ENCODE measurements at regions of chr5 and their contacts with region 1.

Region 1: DNA sequence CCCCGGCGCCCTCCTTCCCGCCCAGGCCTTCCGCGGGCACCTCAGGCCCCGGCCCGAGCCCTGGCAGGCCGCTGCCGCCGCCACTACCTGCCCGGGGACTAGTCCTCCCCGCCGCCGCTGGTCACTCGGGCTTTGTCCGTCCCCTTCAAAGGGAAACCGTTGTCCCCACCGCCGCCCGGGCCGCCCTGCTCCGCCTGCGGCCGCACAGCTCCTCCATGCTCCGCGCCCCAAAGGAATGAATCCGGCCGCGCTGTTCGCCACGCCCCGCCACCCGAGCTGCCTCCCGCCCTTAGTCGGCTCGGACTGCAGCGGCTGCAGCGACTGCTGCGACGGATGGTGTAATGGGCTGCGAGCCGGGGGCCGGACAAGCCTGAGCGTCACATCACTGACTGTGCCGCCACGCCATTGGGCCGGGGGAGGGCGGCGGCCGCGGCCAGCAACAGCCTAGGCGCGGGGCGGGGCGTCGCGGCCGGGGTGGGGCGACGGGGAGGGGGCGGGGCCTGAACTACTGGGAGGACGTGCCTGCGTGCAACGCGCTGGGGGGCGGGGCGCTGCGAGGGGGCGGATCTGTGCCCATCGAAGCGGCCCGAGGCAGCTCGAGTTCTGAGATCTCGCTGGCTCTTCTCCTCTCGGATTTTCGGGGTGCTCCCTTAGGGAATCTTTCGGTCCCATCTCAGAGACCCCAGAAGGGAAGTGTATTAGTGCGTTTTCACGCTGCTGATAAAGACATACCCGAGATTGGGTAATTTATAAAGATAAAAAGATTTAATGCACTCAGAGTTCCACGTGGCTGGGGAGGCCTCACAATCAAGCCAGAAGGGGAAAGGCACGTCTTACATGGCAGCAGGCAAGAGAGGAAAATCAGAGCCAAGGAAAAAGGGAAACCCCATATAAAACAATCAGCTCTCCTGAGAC is at the start of gene FEM1C:
- DNase-seq: peak; percentile 91 to 95 (median 92)
- H3K4me3 ChIP-seq: peak within 1 kb of the TSS; percentile 64 to 71
- H3K4me3 Mint-ChIP-seq: peak within 1 kb of the TSS; percentile 93 to 100 (median 95)
- H3K27ac ChIP-seq: peak within 1 kb of the TSS; percentile 97
- H3K27ac Mint-ChIP-seq: peak within 1 kb of the TSS; percentile 97 to 99 (median 98)
- H3K4me1 ChIP-seq: peaks cover 44% of the 10 kb centered on the region
- H3K4me1 Mint-ChIP-seq: peaks cover 30 to 53% (median 38%) of the 10 kb centered on the region in 4 donors
- H3K27me3 ChIP-seq: no peaks in the 10 kb centered on the region
- H3K27me3 Mint-ChIP-seq: no peaks in the 10 kb centered on the region
- total RNA-seq, gene FEM1C: 17.4 to 19.7 TPM

Region 2: DNA sequence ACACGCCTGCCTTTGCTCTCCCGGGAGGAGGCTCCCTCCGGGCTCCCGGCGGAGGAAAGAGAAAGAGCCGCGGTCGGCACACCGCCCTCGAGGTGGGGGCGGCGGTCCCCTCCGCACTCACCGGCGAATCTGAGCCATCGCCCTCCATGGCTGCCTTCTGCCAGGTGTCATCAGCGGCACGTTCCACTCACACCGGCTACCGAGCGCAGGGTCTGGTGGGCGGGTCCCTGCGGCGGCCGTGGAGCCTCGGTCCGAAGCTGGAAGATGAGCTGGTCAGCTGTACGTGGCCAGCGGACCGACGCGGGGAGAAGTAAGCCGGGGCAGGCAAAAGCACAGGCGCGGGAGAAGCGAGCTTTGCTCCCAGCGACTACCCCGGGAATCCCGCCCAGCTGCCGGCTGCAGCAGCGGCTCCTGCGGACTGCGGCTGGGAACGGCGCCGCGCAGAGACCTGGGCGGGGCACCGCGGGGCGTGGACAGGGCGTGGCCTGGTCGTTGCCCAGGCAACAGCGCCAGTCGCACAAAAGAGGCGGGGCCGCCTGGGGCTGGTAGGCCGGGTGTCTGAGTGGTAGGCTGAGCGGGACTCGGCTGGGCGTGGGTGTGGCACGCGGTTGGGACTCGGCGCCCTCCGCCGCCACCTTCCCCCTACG is 375.1 kb before region 1 on chr5 and contains the start of gene TRIM36:
- CTCF ChIA-PET with region 1: no interaction called
- POLR2A ChIA-PET with region 1: no interaction called
- intact Hi-C with region 1: loop called (anchors 2 kb)
- DNase-seq: peak; percentile 83 to 87 (median 86)
- H3K4me3 ChIP-seq: peak within 1 kb of the TSS; percentile 17 to 67
- H3K4me3 Mint-ChIP-seq: peak within 1 kb of the TSS; percentile 79 to 84 (median 81)
- H3K27ac ChIP-seq: no peak within 1 kb of the TSS
- H3K27ac Mint-ChIP-seq: peak within 1 kb of the TSS in 3 of 7 donors; percentile 25 to 64 (median 41)
- H3K4me1 ChIP-seq: peaks cover 21% of the 10 kb centered on the region
- H3K4me1 Mint-ChIP-seq: peaks cover 2 to 13% (median 11%) of the 10 kb centered on the region in 4 donors
- H3K27me3 ChIP-seq: peaks cover 43% of the 10 kb centered on the region
- H3K27me3 Mint-ChIP-seq: peaks cover 38 to 48% of the 10 kb centered on the region in 2 donors
- total RNA-seq, gene TRIM36: not detected

Region 3: GRCh38 chr5:115296124-115297022 is 248.3 kb before region 1 on chr5 and contains the start of gene CCDC112:
- CTCF ChIA-PET with region 1: no interaction called
- POLR2A ChIA-PET with region 1: interaction called, 21 read pairs
- intact Hi-C with region 1: loop called (anchors 1 kb)
- DNase-seq: peak; percentile 61 to 72 (median 64)
- H3K4me3 ChIP-seq: peak within 1 kb of the TSS; percentile 5 to 44
- H3K4me3 Mint-ChIP-seq: peak within 1 kb of the TSS; percentile 83 to 91 (median 89)
- H3K27ac ChIP-seq: no peak within 1 kb of the TSS
- H3K27ac Mint-ChIP-seq: peak within 1 kb of the TSS in 6 of 7 donors; percentile 44 to 83 (median 55)
- H3K4me1 ChIP-seq: peaks cover 13% of the 10 kb centered on the region
- H3K4me1 Mint-ChIP-seq: peaks cover 6 to 17% (median 15%) of the 10 kb centered on the region in 4 donors
- H3K27me3 ChIP-seq: no peaks in the 10 kb centered on the region
- H3K27me3 Mint-ChIP-seq: peaks cover 1 to 2% of the 10 kb centered on the region in 2 donors
- total RNA-seq, gene CCDC112: 5.9 to 6.3 TPM

Region 4: GRCh38 chr5:115530426-115530825 is 14.3 kb before region 1 on chr5:
- CTCF ChIA-PET with region 1: interaction called, 4 read pairs
- POLR2A ChIA-PET with region 1: interaction called, 5 read pairs
- intact Hi-C with region 1: loop called (anchors 1 kb)
- DNase-seq: no peak
- H3K4me3 ChIP-seq: no peak overlapping the region
- H3K4me3 Mint-ChIP-seq: peak overlapping the region in 1 of 8 donors; percentile 23
- H3K27ac ChIP-seq: no peak overlapping the region
- H3K27ac Mint-ChIP-seq: no peak overlapping the region
- H3K4me1 ChIP-seq: peaks cover 53% of the 10 kb centered on the region
- H3K4me1 Mint-ChIP-seq: peaks cover 46 to 74% (median 59%) of the 10 kb centered on the region in 4 donors
- H3K27me3 ChIP-seq: no peaks in the 10 kb centered on the region
- H3K27me3 Mint-ChIP-seq: no peaks in the 10 kb centered on the region

Region 5: DNA sequence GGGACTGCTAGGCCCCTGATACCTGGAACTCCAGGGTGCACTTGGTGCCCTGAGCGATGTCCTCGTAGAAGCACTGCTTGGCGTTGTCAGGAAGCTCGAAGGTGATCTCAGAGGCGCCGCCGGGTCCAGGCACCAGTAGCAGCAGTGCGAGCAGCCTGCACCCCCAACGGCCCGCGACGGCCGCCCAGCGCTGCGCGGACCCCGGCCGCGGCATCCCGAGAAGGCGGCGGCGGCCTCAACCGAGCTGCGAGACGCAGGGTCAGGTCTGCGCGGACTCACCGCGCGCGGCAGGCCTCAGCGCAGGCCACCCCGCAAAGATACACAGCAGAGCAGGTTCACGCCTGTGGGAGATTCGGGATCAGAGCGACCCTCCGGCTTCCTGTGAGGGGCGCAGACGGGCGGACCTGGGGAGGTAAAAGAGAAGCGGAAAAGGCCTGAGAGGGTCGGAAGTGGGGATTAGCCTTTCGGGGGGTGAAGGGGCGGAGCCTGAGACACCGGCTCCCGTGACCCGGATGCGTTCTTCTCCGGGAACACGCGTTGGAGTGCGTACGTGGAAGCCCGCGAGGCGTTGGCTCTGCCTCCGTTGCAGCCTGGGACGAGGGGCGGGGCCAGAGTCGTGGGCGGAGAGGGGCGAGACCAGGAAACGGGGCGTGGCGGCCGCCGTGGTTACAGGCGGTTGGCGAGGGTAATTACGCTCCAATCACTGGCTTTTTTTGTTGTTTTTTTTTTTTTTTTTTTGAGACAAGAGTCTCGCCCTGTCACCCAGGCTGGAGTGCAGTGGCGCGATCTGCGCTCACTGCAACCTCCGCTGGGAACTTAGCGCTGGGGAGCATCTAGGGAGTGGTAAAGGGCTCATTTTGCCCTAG is 81.1 kb after region 1 on chr5 and contains the start of gene TMED7:
- CTCF ChIA-PET with region 1: interaction called, 9 read pairs
- POLR2A ChIA-PET with region 1: interaction called, 35 read pairs
- intact Hi-C with region 1: loop called (anchors 1 kb)
- DNase-seq: peak; percentile 99
- H3K4me3 ChIP-seq: peak within 1 kb of the TSS; percentile 79 to 86
- H3K4me3 Mint-ChIP-seq: peak within 1 kb of the TSS in 2 of 8 donors; percentile 97 to 98
- H3K27ac ChIP-seq: peak within 1 kb of the TSS; percentile 93
- H3K27ac Mint-ChIP-seq: peak within 1 kb of the TSS in 4 of 7 donors; percentile 95 to 98 (median 98)
- H3K4me1 ChIP-seq: peaks cover 42% of the 10 kb centered on the region
- H3K4me1 Mint-ChIP-seq: peaks cover 18 to 19% (median 19%) of the 10 kb centered on the region in 4 donors
- H3K27me3 ChIP-seq: no peaks in the 10 kb centered on the region
- H3K27me3 Mint-ChIP-seq: no peaks in the 10 kb centered on the region
- total RNA-seq, gene TMED7: 47.5 to 49.5 TPM

Region 6: GRCh38 chr5:115857636-115858309 is 313.1 kb after region 1 on chr5:
- CTCF ChIA-PET with region 1: no interaction called
- POLR2A ChIA-PET with region 1: no interaction called
- intact Hi-C with region 1: no loop called
- DNase-seq: no peak
- H3K4me3 ChIP-seq: no peak overlapping the region
- H3K4me3 Mint-ChIP-seq: peak overlapping the region in 1 of 8 donors; percentile 2
- H3K27ac ChIP-seq: no peak overlapping the region
- H3K27ac Mint-ChIP-seq: no peak overlapping the region
- H3K4me1 ChIP-seq: peaks cover 8% of the 10 kb centered on the region
- H3K4me1 Mint-ChIP-seq: peaks cover 26 to 40% (median 34%) of the 10 kb centered on the region in 4 donors
- H3K27me3 ChIP-seq: no peaks in the 10 kb centered on the region
- H3K27me3 Mint-ChIP-seq: no peaks in the 10 kb centered on the region

Measured in CD4-positive, alpha-beta memory T cell (primary cell).